Naive thymus-derived CD4-positive, alpha-beta T cell (primary cell): ENCODE measurements at regions of chr9 and their contacts with region 1.

Region 1: GRCh38 chr9:14857449-14858305 is 52.6 kb downstream of the FREM1 start:
- DNase-seq: no peak
- ATAC-seq: no peak
- H3K4me3 ChIP-seq: no peak overlapping the region
- H3K4me3 Mint-ChIP-seq: no peak overlapping the region
- H3K27ac ChIP-seq: no peak overlapping the region
- H3K27ac Mint-ChIP-seq: no peak overlapping the region
- H3K4me1 ChIP-seq: no peaks in the 10 kb centered on the region
- H3K4me1 Mint-ChIP-seq: no peaks in the 10 kb centered on the region
- H3K27me3 ChIP-seq: no peaks in the 10 kb centered on the region
- H3K27me3 Mint-ChIP-seq: peaks cover 0 to 13% (median 0%) of the 10 kb centered on the region in 5 donors

Region 2: DNA sequence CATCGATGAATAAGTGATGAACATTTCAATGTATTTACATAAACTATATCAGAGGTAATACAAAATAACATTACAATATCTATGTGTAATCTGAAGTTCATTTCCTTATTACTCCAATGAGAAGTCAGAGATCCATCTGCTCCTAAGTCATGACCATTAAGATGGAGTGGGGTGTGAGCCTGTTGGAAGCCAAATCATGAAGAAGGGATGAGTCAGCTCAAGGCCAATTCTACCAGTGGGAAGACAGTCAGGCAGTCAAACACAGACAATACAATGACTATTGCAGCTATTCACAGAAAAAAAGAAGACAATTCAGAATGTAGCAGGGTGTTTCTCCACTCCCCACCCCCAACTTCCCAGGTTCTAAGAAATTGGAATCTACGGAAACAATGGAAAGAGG is 698.8 kb before region 1 on chr9:
- CTCF ChIA-PET with region 1: no interaction called
- POLR2A ChIA-PET with region 1: no interaction called
- intact Hi-C with region 1: no loop called
- DNase-seq: no peak
- ATAC-seq: no peak
- H3K4me3 ChIP-seq: no peak overlapping the region
- H3K4me3 Mint-ChIP-seq: no peak overlapping the region
- H3K27ac ChIP-seq: no peak overlapping the region
- H3K27ac Mint-ChIP-seq: no peak overlapping the region
- H3K4me1 ChIP-seq: no peaks in the 10 kb centered on the region
- H3K4me1 Mint-ChIP-seq: peaks cover 0 to 6% (median 1%) of the 10 kb centered on the region in 7 donors
- H3K27me3 ChIP-seq: no peaks in the 10 kb centered on the region
- H3K27me3 Mint-ChIP-seq: peaks cover 0 to 5% (median 0%) of the 10 kb centered on the region in 5 donors

Region 3: GRCh38 chr9:14895849-14896248 is 38.2 kb after region 1 on chr9:
- CTCF ChIA-PET with region 1: no interaction called
- POLR2A ChIA-PET with region 1: no interaction called
- intact Hi-C with region 1: no loop called
- DNase-seq: no peak
- ATAC-seq: no peak
- H3K4me3 ChIP-seq: no peak overlapping the region
- H3K4me3 Mint-ChIP-seq: no peak overlapping the region
- H3K27ac ChIP-seq: no peak overlapping the region
- H3K27ac Mint-ChIP-seq: no peak overlapping the region
- H3K4me1 ChIP-seq: no peaks in the 10 kb centered on the region
- H3K4me1 Mint-ChIP-seq: no peaks in the 10 kb centered on the region
- H3K27me3 ChIP-seq: no peaks in the 10 kb centered on the region
- H3K27me3 Mint-ChIP-seq: no peaks in the 10 kb centered on the region

Region 4: DNA sequence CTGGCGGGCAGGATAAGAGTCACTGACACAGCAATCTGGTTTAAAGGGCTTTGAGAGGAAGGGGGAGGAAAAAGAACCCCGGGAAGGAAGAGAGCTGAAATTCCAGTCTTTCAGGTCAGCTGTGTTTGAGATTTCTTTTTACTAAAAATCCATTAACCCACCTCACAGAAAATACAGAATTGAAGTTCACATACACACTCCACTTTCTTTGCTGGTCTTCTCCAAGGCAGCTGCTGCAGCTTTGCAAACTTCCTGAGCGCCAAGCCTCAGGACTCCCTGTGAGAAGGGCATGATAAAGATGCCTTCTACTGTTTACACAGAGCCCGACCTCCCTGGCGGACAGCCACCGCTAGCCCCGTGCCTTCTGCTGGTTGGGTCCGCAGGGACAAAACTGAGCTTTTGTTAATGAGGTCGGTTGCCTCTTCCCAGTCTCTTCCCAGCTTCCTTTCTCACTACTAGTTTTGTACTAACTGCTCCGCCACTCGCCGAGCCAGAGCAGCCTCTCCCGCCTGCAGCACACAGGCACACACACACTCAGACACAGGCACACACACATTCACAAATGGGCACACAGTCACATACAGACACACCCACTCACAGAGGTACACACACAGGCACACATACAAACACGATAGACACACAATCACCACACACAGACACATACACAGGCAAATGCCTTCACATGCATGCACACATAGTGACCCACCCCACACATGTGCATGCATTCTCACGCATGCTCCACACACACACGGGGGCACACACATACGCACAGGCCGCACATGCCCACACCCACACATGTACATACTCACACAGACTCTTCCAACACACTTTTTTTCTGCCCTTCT is 52.5 kb after region 1 on chr9 and contains the start of gene FREM1:
- CTCF ChIA-PET with region 1: no interaction called
- POLR2A ChIA-PET with region 1: no interaction called
- intact Hi-C with region 1: loop called in 1 of 2 experiments (anchors 10 kb)
- DNase-seq: no peak
- ATAC-seq: no peak
- H3K4me3 ChIP-seq: no peak within 1 kb of the TSS
- H3K4me3 Mint-ChIP-seq: no peak within 1 kb of the TSS
- H3K27ac ChIP-seq: no peak within 1 kb of the TSS
- H3K27ac Mint-ChIP-seq: no peak within 1 kb of the TSS
- H3K4me1 ChIP-seq: no peaks in the 10 kb centered on the region
- H3K4me1 Mint-ChIP-seq: no peaks in the 10 kb centered on the region
- H3K27me3 ChIP-seq: peaks cover 0 to 4% of the 10 kb centered on the region in 2 donors
- H3K27me3 Mint-ChIP-seq: peaks cover 0 to 15% (median 0%) of the 10 kb centered on the region in 5 donors
- total RNA-seq, gene FREM1: 0.24 to 0.86 TPM in 2 of 5 experiments, not detected in the others